H1 (cell line): ENCODE measurements at regions of chr17 and their contacts with region 1.

Region 1: DNA sequence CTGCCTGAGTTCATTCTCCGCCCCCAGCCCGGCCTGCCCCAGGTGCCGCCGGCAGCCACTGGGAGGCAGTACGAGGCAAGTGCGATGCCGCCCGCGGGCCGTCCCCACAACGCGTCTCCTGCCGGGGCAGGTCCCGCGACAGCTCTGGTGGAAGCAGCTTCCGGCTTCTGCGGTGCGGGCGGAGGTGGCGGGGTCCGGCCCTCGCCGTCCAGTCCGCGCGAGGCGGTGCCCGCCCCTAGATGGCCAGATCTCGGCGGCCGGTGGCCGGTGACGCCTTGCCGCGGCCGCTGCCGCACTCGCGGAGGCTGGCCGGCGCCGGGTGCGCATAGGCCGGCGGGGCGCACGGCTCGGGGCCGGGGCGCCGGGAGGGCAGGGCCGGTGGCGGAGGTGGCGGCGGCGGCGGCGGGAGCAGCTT is 1.8 kb downstream of the GJD3 start:
- DNase-seq: peak in 1 of 2 experiments; percentile 94
- H3K4me3 ChIP-seq: peak overlapping the region; percentile 21 to 65 (median 42); a peak in 7 of 8 replicates
- H3K27ac ChIP-seq: no peak overlapping the region
- H3K4me1 ChIP-seq: peaks cover 6 to 34% (median 23%) of the 10 kb centered on the region in 4 experiments
- H3K27me3 ChIP-seq: peaks cover 8 to 27% (median 24%) of the 10 kb centered on the region in 4 experiments
- CTCF ChIP-seq: peak; percentile 81 to 96 (median 86)
- EP300 ChIP-seq: no peak
- POLR2A ChIP-seq: no peak
- RAD21 ChIP-seq: peak; percentile 73 to 78

Region 2: GRCh38 chr17:40247926-40248495 is 114.7 kb before region 1 on chr17:
- CTCF ChIA-PET with region 1: no interaction called
- POLR2A ChIA-PET with region 1: no interaction called
- DNase-seq: no peak
- H3K4me3 ChIP-seq: no peak overlapping the region
- H3K27ac ChIP-seq: no peak overlapping the region
- H3K4me1 ChIP-seq: no peaks in the 10 kb centered on the region
- H3K27me3 ChIP-seq: no peaks in the 10 kb centered on the region
- CTCF ChIP-seq: no peak
- EP300 ChIP-seq: no peak
- POLR2A ChIP-seq: no peak
- RAD21 ChIP-seq: no peak

Region 3: DNA sequence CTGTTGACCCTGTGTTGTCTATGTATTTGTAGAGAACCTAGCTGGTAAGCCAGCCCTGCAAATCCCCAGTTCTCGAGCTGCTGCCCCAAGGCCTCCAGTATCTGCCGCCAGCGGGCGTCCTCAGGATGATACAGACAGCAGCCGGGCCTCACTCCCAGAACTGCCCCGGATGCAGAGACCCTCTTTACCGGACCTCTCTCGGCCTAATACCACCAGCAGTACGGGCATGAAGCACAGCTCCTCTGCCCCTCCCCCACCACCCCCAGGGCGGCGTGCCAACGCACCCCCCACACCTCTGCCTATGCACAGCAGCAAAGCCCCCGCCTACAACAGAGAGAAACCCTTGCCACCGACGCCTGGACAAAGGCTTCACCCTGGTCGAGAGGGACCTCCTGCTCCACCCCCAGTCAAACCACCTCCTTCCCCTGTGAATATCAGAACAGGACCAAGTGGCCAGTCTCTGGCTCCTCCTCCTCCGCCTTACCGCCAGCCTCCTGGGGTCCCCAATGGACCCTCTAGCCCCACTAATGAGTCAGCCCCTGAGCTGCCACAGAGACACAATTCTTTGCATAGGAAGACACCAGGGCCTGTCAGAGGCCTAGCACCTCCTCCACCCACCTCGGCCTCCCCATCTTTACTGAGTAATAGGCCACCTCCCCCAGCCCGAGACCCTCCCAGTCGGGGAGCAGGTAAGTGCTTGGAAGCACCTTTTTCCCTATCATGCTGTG is 98.1 kb before region 1 on chr17:
- CTCF ChIA-PET with region 1: no interaction called
- POLR2A ChIA-PET with region 1: no interaction called
- DNase-seq: no peak
- H3K4me3 ChIP-seq: no peak overlapping the region
- H3K27ac ChIP-seq: no peak overlapping the region
- H3K4me1 ChIP-seq: peaks cover 0 to 2% (median 0%) of the 10 kb centered on the region in 4 experiments; a peak in 1 of 7 replicates
- H3K27me3 ChIP-seq: no peaks in the 10 kb centered on the region
- CTCF ChIP-seq: no peak
- EP300 ChIP-seq: no peak
- POLR2A ChIP-seq: no peak
- RAD21 ChIP-seq: no peak

Region 4: GRCh38 chr17:40317880-40318829 is 44.5 kb before region 1 on chr17:
- CTCF ChIA-PET with region 1: interaction called, 1,198 read pairs
- POLR2A ChIA-PET with region 1: interaction called, 570 read pairs
- DNase-seq: peak; percentile 81 to 88
- H3K4me3 ChIP-seq: peak overlapping the region; percentile 55 to 81 (median 71)
- H3K27ac ChIP-seq: no peak overlapping the region
- H3K4me1 ChIP-seq: peaks cover 0 to 40% (median 30%) of the 10 kb centered on the region in 4 experiments; a peak in 6 of 7 replicates
- H3K27me3 ChIP-seq: peaks cover 0 to 30% (median 16%) of the 10 kb centered on the region in 4 experiments; a peak in 5 of 7 replicates
- CTCF ChIP-seq: no peak
- EP300 ChIP-seq: no peak
- POLR2A ChIP-seq: peak in 1 of 2 experiments; percentile 41; a peak in 1 of 3 replicates
- RAD21 ChIP-seq: no peak

Region 5: DNA sequence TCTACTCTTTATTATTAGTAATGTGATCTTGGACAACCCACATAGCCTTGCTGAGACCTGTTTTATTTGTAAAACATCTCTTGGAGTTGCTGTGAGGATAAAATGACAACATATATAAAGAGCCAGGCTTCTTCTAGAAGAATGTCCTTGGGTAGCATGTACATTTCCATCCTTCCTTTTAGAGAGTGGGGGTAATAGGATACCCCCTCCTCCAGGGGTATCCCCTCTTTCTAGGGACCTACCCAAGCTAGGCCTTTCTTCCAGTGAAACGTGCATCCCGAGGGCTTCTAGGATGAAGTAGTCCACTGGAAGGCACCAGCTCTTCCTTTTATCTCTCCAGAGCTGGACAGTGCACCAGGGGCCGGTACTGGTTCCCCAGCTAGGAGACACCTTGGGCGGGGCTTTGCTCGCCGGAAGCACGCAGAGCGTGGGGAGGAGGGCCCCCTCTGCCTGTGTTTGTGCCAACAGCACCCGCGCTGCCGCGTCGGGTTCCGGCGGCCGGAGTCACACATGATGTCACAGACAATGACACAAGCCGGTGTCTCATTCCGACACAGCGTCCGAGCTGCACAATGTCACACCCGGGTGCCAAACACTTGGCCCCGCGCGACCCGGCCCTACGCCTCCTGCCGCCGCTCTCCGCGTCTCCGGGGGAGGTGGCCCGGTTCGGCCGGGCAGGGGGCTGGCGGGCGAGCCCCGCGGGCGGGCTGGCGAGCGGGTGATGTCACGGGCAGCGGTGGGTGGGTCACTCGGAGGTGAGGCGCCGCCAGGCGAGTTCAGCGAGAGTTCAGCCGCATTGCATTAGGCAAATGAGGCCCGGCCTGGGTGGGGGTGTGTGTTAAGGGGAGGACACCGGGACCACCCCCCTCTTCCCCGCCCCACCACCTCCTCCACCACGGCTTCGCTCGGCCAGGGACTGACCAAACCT is 21.6 kb before region 1 on chr17:
- CTCF ChIA-PET with region 1: interaction called, 1,198 read pairs
- POLR2A ChIA-PET with region 1: interaction called, 3 read pairs
- DNase-seq: peak in 1 of 2 experiments; percentile 82
- H3K4me3 ChIP-seq: peak overlapping the region; percentile 57 to 74 (median 62)
- H3K27ac ChIP-seq: no peak overlapping the region
- H3K4me1 ChIP-seq: peaks cover 13 to 35% (median 29%) of the 10 kb centered on the region in 4 experiments
- H3K27me3 ChIP-seq: peaks cover 22 to 80% (median 58%) of the 10 kb centered on the region in 4 experiments
- CTCF ChIP-seq: no peak
- EP300 ChIP-seq: no peak
- POLR2A ChIP-seq: no peak
- RAD21 ChIP-seq: no peak

Region 6: GRCh38 chr17:40551879-40552768 is 189.4 kb after region 1 on chr17:
- CTCF ChIA-PET with region 1: interaction called, 10 read pairs
- POLR2A ChIA-PET with region 1: no interaction called
- DNase-seq: no peak
- H3K4me3 ChIP-seq: no peak overlapping the region
- H3K27ac ChIP-seq: no peak overlapping the region
- H3K4me1 ChIP-seq: peaks cover 0 to 7% (median 2%) of the 10 kb centered on the region in 4 experiments; a peak in 2 of 7 replicates
- H3K27me3 ChIP-seq: no peaks in the 10 kb centered on the region; a peak in 1 of 7 replicates
- CTCF ChIP-seq: no peak
- EP300 ChIP-seq: no peak
- POLR2A ChIP-seq: no peak
- RAD21 ChIP-seq: no peak